ENCODE measurements at regions of chr16 and their contacts with region 1.

Region 1: DNA sequence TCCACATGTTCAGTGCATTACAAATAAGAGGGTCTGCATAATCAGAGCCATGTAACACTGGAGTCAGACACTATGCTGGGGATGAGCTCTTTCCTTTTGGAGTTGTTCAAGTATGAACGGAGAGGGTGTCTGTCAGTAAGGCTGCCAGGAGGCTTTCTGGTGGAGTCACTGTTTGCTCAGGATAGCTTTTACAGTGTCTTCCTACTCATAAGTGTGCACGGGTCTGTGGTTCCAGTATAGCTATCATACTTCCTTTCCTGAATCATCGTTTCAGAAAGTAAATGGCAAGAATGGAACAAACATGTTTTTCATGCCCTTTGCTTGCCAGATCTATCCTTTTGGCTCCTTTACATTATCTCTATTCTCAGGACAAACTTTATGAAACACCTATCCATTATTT is 152.7 kb upstream of the CDH11 start:
- DNase-seq: no peak
- ATAC-seq: no peak
- H3K4me3 ChIP-seq: no peak overlapping the region
- H3K27ac ChIP-seq: no peak overlapping the region
- H3K4me1 ChIP-seq: no peaks in the 10 kb centered on the region
- H3K27me3 ChIP-seq: no peaks in the 10 kb centered on the region
- CTCF ChIP-seq: no peak

Region 2: GRCh38 chr16:65336160-65336559 is 61.6 kb after region 1 on chr16:
- intact Hi-C with region 1: loop called in 1 of 10 experiments (anchors 10 kb)
- DNase-seq: no peak
- ATAC-seq: no peak
- H3K4me3 ChIP-seq: no peak overlapping the region
- H3K27ac ChIP-seq: no peak overlapping the region
- H3K4me1 ChIP-seq: no peaks in the 10 kb centered on the region
- H3K27me3 ChIP-seq: peaks cover 0 to 4% (median 0%) of the 10 kb centered on the region in 7 donors
- CTCF ChIP-seq: no peak

Measured in heart right ventricle (tissue), 16 donors.